ENCODE measurements at regions of chr1 and their contacts with region 1.

Region 1: GRCh38 chr1:89503690-89504089 is 20.9 kb upstream of the LRRC8B start:
- DNase-seq: no peak
- H3K4me3 ChIP-seq: no peak overlapping the region
- H3K27ac ChIP-seq: no peak overlapping the region
- H3K4me1 ChIP-seq: no peaks in the 10 kb centered on the region
- H3K27me3 ChIP-seq: no peaks in the 10 kb centered on the region
- CTCF ChIP-seq: no peak
- POLR2A ChIP-seq: no peak

Region 2: GRCh38 chr1:87588495-87588894 is 1915.2 kb before region 1 on chr1:
- intact Hi-C with region 1: no loop called
- DNase-seq: no peak
- H3K4me3 ChIP-seq: no peak overlapping the region
- H3K27ac ChIP-seq: no peak overlapping the region
- H3K4me1 ChIP-seq: no peaks in the 10 kb centered on the region
- H3K27me3 ChIP-seq: no peaks in the 10 kb centered on the region
- CTCF ChIP-seq: no peak
- POLR2A ChIP-seq: no peak

Region 3: GRCh38 chr1:89540406-89540970 is 36.8 kb after region 1 on chr1:
- intact Hi-C with region 1: loop called (anchors 2 kb)
- DNase-seq: no peak
- H3K4me3 ChIP-seq: no peak overlapping the region
- H3K27ac ChIP-seq: no peak overlapping the region
- H3K4me1 ChIP-seq: no peaks in the 10 kb centered on the region
- H3K27me3 ChIP-seq: no peaks in the 10 kb centered on the region
- CTCF ChIP-seq: no peak
- POLR2A ChIP-seq: no peak

Measured in breast epithelium (tissue), 4 donors.